ENCODE measurements at regions of chr21 and their contacts with region 1.

Region 1: DNA sequence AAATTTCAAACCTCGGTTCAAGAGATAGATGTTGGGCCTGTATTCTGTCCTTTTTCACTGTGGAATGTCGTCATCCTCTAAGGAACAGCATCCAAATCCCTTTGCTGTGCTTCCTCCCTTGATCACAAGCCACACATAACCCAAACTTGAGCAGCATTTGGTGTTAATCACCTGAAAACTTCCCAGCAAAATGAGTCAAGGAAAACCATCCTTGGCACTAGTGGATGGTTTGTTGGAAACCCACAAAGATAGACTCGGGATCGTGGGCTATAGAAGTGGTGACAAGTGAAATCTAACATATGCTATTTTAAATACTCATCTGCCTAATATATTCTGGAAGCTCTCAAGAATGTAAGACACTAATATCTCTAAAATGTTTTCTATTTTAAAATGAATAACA is 459.1 kb downstream of the SETD4 start:
- DNase-seq: no peak
- H3K4me3 Mint-ChIP-seq: no peak overlapping the region
- H3K27ac Mint-ChIP-seq: no peak overlapping the region
- H3K4me1 Mint-ChIP-seq: no peaks in the 10 kb centered on the region
- H3K27me3 Mint-ChIP-seq: peaks cover 17% of the 10 kb centered on the region

Region 2: DNA sequence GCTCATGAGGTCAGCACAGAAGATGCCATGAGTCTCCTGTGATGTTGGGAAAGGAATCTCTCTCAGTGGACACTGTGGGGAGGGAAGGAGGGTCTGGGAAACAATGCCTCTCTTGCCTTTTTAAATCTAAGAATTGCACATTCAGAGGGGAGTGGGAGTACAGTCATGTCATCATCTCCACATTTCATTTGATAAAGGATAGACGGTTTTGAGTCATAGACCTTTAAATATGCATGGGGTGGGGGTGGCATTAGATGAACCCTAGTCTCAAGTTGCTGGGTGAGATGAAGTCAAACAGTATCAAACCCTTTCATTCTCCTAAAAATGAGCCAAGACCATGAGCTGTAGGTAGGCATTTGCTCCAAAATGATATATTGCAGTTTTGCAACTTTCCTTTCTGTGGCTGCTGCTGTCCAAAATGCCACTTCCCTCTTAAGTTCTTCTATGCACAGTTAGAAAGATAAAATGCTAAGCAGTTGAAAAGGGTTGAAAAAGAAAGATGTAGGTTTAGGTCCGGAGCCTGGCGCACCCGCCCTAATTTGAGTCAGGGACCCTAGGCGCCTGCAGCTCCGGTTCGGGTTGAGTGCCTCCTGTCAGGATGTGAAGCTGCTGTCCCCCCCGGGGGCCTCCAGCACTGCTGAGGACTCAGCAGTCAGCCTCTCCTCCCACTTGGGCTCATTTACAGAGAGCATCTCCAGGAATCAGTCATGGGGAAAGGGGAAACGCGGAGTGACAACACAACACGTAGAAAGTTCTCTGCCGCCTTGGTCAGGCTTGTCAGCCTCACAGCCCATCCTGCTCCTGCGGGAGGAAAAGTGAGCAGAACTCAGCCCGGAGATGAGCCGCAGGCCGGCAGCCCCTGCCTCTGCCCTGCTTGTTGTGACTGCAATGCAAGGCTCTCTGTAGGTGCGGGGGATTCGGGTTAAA is 72.8 kb before region 1 on chr21:
- CTCF ChIA-PET with region 1: no interaction called
- POLR2A ChIA-PET with region 1: no interaction called
- intact Hi-C with region 1: no loop called
- DNase-seq: peak; percentile 78
- H3K4me3 Mint-ChIP-seq: peak overlapping the region; percentile 80
- H3K27ac Mint-ChIP-seq: peak overlapping the region; percentile 84
- H3K4me1 Mint-ChIP-seq: peaks cover 48% of the 10 kb centered on the region
- H3K27me3 Mint-ChIP-seq: no peaks in the 10 kb centered on the region

Region 3: DNA sequence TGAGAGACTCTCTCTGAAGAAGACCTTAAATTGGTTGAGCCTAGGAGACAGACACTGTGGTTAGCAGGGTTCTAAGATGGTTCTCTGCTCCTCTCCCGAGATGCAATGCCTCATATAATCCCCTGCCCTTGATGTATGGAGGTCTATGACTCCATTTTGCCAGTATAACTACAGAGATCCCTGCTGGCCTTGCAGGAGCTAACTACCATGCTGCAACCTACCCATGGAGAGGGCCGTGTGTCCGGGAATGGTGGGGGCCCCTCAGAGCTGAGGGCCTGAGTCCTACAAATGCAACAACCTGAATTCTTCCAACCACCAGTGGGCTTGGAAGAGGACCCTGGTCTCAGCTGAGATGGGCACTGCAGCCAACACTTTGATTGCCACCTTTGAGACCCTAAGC is 71.1 kb after region 1 on chr21:
- CTCF ChIA-PET with region 1: no interaction called
- POLR2A ChIA-PET with region 1: no interaction called
- intact Hi-C with region 1: loop called (anchors 2 kb)
- DNase-seq: no peak
- H3K4me3 Mint-ChIP-seq: no peak overlapping the region
- H3K27ac Mint-ChIP-seq: no peak overlapping the region
- H3K4me1 Mint-ChIP-seq: no peaks in the 10 kb centered on the region
- H3K27me3 Mint-ChIP-seq: peaks cover 17% of the 10 kb centered on the region